Activated naive CD4-positive, alpha-beta T cell treated with anti-CD3 and anti-CD28 coated beads for 36 hours (primary cell): ENCODE measurements at regions of chr17 and their contacts with region 1.

Region 1: GRCh38 chr17:29777663-29778062 is 152.4 kb downstream of the SSH2 start:
- DNase-seq: no peak
- H3K4me3 Mint-ChIP-seq: no peak overlapping the region
- H3K27ac Mint-ChIP-seq: no peak overlapping the region
- H3K4me1 Mint-ChIP-seq: peaks cover 5% of the 10 kb centered on the region
- H3K27me3 Mint-ChIP-seq: no peaks in the 10 kb centered on the region

Region 2: GRCh38 chr17:29579866-29580771 is 197.5 kb before region 1 on chr17:
- CTCF ChIA-PET with region 1: interaction called, 3 read pairs
- intact Hi-C with region 1: loop called (anchors 1 kb)
- DNase-seq: peak; percentile 96
- H3K4me3 Mint-ChIP-seq: no peak overlapping the region
- H3K27ac Mint-ChIP-seq: peak overlapping the region; percentile 77
- H3K4me1 Mint-ChIP-seq: peaks cover 24% of the 10 kb centered on the region
- H3K27me3 Mint-ChIP-seq: no peaks in the 10 kb centered on the region

Region 3: GRCh38 chr17:29628644-29629043 is 149.0 kb before region 1 on chr17:
- CTCF ChIA-PET with region 1: interaction called, 15 read pairs
- intact Hi-C with region 1: no loop called
- DNase-seq: no peak
- H3K4me3 Mint-ChIP-seq: no peak overlapping the region
- H3K27ac Mint-ChIP-seq: peak overlapping the region; percentile 41
- H3K4me1 Mint-ChIP-seq: peaks cover 61% of the 10 kb centered on the region
- H3K27me3 Mint-ChIP-seq: no peaks in the 10 kb centered on the region

Region 4: GRCh38 chr17:29645515-29646051 is 132.1 kb before region 1 on chr17:
- CTCF ChIA-PET with region 1: interaction called, 154 read pairs
- intact Hi-C with region 1: no loop called
- DNase-seq: no peak
- H3K4me3 Mint-ChIP-seq: no peak overlapping the region
- H3K27ac Mint-ChIP-seq: peak overlapping the region; percentile 48
- H3K4me1 Mint-ChIP-seq: peaks cover 25% of the 10 kb centered on the region
- H3K27me3 Mint-ChIP-seq: no peaks in the 10 kb centered on the region